ENCODE measurements at regions of chr14 and their contacts with region 1.

Region 1: DNA sequence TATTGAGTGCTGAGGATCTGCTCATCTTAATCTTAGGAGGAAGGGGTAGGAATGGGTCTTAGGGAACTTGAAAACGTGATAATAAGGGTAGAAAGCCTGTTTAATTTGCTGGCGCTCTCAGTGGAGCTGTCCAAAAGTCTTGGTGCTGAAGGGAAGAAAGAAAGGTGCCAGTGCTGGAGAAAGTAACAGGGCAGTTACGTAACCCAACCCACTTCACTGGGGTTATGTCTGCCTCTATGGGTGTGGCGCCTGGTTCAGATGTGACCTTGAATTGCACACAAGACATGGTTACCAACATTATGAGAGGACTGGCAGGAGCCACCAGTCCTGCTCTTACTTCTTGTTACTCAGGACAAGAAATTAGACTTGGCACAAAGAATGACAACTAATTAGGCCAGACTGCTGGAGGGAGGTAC is 18.6 kb upstream of the GPATCH2L start:
- DNase-seq: peak; percentile 56
- ATAC-seq: no peak
- H3K4me3 ChIP-seq: no peak overlapping the region
- H3K27ac ChIP-seq: no peak overlapping the region
- H3K4me1 ChIP-seq: no peaks in the 10 kb centered on the region
- H3K27me3 ChIP-seq: peaks cover 68% of the 10 kb centered on the region
- CTCF ChIP-seq: no peak

Region 2: DNA sequence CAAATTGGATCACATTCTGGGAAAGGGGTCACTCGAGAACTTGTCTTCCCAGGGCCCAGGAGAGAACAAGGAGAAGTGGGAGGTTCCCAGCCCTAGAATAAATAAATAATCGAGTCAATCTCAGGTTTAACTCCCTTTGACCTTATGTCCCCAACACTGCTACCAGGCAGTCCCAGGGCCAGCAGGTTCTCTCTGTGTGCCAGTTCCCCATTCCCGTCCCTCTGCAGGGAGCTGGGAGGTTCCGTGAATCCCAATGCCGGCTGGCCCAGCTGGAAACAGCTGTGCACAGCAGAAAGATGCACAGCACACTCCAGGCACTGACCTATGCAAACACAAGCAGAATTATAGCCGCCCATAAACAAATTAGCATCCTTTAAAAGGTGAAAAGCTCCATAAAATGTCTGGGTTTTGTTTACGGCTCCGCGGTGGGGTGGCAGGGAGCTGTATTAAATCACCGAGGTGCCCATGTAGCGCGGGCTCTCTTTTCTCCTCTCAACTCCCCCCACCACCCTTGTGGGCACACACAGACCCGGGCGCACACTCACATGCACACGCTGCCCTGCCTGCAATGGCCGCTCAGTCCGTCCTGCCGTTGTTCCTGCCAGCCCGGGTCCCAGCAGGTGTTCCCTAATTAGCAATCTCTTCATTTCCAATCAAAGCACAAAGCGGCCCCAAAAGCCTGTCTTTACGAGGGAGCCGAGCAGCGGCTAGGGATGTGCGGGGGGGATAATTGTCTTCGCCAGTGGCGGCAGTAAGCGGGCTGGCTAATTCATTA is 196.2 kb after region 1 on chr14:
- CTCF ChIA-PET with region 1: no interaction called
- POLR2A ChIA-PET with region 1: interaction called, 21 read pairs
- intact Hi-C with region 1: no loop called
- DNase-seq: no peak
- ATAC-seq: no peak
- H3K4me3 ChIP-seq: no peak overlapping the region
- H3K27ac ChIP-seq: no peak overlapping the region
- H3K4me1 ChIP-seq: no peaks in the 10 kb centered on the region
- H3K27me3 ChIP-seq: peaks cover 29% of the 10 kb centered on the region
- CTCF ChIP-seq: no peak

Region 3: GRCh38 chr14:76386915-76387782 is 254.1 kb after region 1 on chr14:
- CTCF ChIA-PET with region 1: no interaction called
- POLR2A ChIA-PET with region 1: no interaction called
- intact Hi-C with region 1: loop called (anchors 1 kb)
- DNase-seq: peak; percentile 83
- ATAC-seq: peak; percentile 99
- H3K4me3 ChIP-seq: no peak overlapping the region
- H3K27ac ChIP-seq: no peak overlapping the region
- H3K4me1 ChIP-seq: no peaks in the 10 kb centered on the region
- H3K27me3 ChIP-seq: peaks cover 61% of the 10 kb centered on the region
- CTCF ChIP-seq: peak; percentile 97